Aorta (tissue), 5 donors: ENCODE measurements at regions of chr20 and their contacts with region 1.

Region 1: GRCh38 chr20:10553326-10553984 is 118.3 kb downstream of the SLX4IP start:
- DNase-seq: peak; percentile 77 to 88
- ATAC-seq: peak; percentile 71
- H3K4me3 ChIP-seq: no peak overlapping the region
- H3K27ac ChIP-seq: no peak overlapping the region
- H3K4me1 ChIP-seq: peaks cover 4 to 5% of the 10 kb centered on the region in 2 donors
- H3K27me3 ChIP-seq: no peaks in the 10 kb centered on the region

Region 2: DNA sequence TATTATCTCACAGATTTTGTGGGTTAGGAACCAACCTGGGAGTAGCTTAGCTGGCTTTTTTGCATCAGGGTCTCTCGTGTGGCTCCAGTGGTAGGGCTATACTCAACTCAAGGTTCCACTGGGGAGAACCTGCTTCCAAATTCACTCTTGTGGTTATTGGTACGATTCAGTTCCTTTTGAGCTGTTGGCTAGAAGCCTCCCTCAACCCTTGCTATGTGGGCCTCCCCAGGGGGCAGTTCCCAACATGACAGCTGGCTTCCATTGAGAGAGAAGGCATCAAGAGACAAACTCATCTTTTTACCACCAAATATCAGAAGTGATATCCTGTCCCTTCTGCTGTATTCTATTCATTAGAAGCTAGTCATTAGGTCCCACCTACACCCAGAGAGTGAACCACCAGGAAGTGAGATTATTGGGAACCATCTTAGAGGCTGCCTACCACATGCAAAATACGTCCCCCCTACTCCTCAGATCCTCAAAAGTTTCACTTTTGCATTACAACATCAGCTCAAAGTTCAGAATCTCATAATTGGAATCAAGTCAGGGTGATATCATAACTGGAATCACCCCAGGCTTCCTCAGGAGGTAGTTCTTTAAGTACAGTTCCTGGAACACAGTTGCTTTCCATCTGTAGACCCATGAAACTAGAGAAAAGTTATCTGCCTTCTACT is 150.4 kb before region 1 on chr20:
- intact Hi-C with region 1: no loop called
- DNase-seq: no peak
- ATAC-seq: no peak
- H3K4me3 ChIP-seq: no peak overlapping the region
- H3K27ac ChIP-seq: no peak overlapping the region
- H3K4me1 ChIP-seq: no peaks in the 10 kb centered on the region
- H3K27me3 ChIP-seq: no peaks in the 10 kb centered on the region

Region 3: GRCh38 chr20:10919396-10920140 is 366.1 kb after region 1 on chr20:
- intact Hi-C with region 1: loop called (anchors 5 to 10 kb)
- DNase-seq: peak; percentile 79 to 81
- ATAC-seq: peak; percentile 70
- H3K4me3 ChIP-seq: no peak overlapping the region
- H3K27ac ChIP-seq: peak overlapping the region in 1 of 2 donors; percentile 52
- H3K4me1 ChIP-seq: peaks cover 0 to 3% of the 10 kb centered on the region in 2 donors
- H3K27me3 ChIP-seq: no peaks in the 10 kb centered on the region

Region 4: GRCh38 chr20:11216451-11217314 is 663.2 kb after region 1 on chr20:
- intact Hi-C with region 1: loop called (anchors 5 to 10 kb)
- DNase-seq: no peak
- ATAC-seq: no peak
- H3K4me3 ChIP-seq: no peak overlapping the region
- H3K27ac ChIP-seq: peak overlapping the region in 1 of 2 donors; percentile 46
- H3K4me1 ChIP-seq: peaks cover 1 to 7% of the 10 kb centered on the region in 2 donors
- H3K27me3 ChIP-seq: no peaks in the 10 kb centered on the region

Region 5: GRCh38 chr20:11544029-11544678 is 990.7 kb after region 1 on chr20:
- intact Hi-C with region 1: loop called (anchors 5 kb)
- DNase-seq: no peak
- ATAC-seq: peak; percentile 78
- H3K4me3 ChIP-seq: no peak overlapping the region
- H3K27ac ChIP-seq: no peak overlapping the region
- H3K4me1 ChIP-seq: no peaks in the 10 kb centered on the region
- H3K27me3 ChIP-seq: no peaks in the 10 kb centered on the region